ENCODE measurements at regions of chr3 and their contacts with region 1.

Region 1: GRCh38 chr3:9932843-9933560 is 632 bp upstream of the CRELD1 start:
- DNase-seq: peak; percentile 84
- H3K4me3 ChIP-seq: peak overlapping the region; percentile 19 to 76 (median 55)
- H3K27ac ChIP-seq: peak overlapping the region; percentile 85
- H3K4me1 ChIP-seq: peaks cover 16% of the 10 kb centered on the region
- H3K27me3 ChIP-seq: no peaks in the 10 kb centered on the region
- CTCF ChIP-seq: peak; percentile 75 to 91
- POLR2A ChIP-seq: no peak

Region 2: DNA sequence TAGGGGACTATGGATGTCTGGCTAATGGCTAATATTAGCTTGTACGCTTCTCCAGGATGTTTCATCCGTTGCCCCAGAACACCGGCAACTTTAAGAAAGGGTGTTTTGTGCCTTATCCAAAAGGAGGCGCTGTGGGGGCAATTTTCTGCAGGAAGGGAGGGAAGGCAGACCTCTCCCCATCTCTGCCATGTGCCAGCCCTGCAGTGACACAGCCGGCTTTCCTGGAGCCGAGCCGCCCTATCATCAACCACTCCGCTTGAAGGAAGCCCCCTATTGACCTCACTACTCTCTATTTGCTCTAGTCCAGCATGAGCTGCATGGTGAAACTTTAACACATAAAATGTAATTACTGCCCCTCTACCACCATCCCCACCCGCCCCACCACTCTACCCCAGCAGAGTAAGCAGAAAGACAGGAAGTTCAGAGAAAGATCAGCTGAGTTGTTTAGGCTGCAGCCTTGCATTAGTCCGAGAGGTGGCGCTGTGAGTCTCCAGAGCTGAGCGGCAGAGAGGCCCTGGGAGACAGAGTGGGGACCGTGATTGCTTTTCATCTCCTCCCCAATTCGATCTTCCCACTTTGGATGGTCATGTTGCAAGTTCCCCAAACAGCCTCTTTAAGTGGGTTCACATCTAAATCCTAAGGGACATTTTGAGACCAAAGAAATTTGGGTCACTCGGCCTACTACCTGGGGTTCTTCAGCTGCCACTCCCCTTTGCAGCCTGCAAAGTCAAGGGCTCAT is 945.2 kb before region 1 on chr3:
- CTCF ChIA-PET with region 1: no interaction called
- POLR2A ChIA-PET with region 1: no interaction called
- dilution Hi-C with region 1: no loop called
- intact Hi-C with region 1: no loop called
- DNase-seq: peak; percentile 67
- H3K4me3 ChIP-seq: no peak overlapping the region
- H3K27ac ChIP-seq: no peak overlapping the region
- H3K4me1 ChIP-seq: no peaks in the 10 kb centered on the region
- H3K27me3 ChIP-seq: no peaks in the 10 kb centered on the region
- CTCF ChIP-seq: peak; percentile 70 to 88
- POLR2A ChIP-seq: no peak

Region 3: DNA sequence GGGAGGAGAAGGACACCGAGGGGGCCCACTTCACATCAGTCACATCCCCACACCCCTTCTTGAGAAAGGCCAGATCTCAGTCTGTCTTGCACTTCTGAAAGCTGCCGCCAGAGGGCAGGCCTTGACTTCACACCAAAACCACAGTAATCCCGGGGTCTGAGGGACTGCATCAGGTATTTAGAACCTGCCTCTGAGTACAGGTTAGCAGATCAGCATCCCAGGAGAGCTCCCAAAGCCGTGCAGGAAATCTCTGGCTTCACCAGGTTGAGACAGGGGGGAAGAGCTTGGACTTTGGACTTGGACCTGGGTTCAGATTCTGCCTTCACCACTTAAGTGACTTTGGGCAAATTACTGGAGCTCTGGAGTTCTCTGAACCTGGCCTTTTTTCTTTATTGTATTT is 429.7 kb before region 1 on chr3:
- CTCF ChIA-PET with region 1: no interaction called
- POLR2A ChIA-PET with region 1: no interaction called
- dilution Hi-C with region 1: no loop called
- intact Hi-C with region 1: loop called (anchors 10 kb)
- DNase-seq: peak; percentile 72
- H3K4me3 ChIP-seq: no peak overlapping the region
- H3K27ac ChIP-seq: no peak overlapping the region
- H3K4me1 ChIP-seq: peaks cover 3% of the 10 kb centered on the region
- H3K27me3 ChIP-seq: peaks cover 10 to 15% of the 10 kb centered on the region in 2 experiments
- CTCF ChIP-seq: peak; percentile 88 to 95
- POLR2A ChIP-seq: no peak

Region 4: GRCh38 chr3:9809615-9810432 is 123.2 kb before region 1 on chr3 and contains the start of gene TTLL3:
- CTCF ChIA-PET with region 1: interaction called, 13 read pairs
- POLR2A ChIA-PET with region 1: no interaction called
- dilution Hi-C with region 1: no loop called
- intact Hi-C with region 1: no loop called
- DNase-seq: peak; percentile 53
- H3K4me3 ChIP-seq: peak within 1 kb of the TSS; percentile 52 to 64 (median 55)
- H3K27ac ChIP-seq: peak within 1 kb of the TSS; percentile 36
- H3K4me1 ChIP-seq: peaks cover 12% of the 10 kb centered on the region
- H3K27me3 ChIP-seq: no peaks in the 10 kb centered on the region
- CTCF ChIP-seq: peak in 1 of 2 donors; percentile 5
- POLR2A ChIP-seq: peak; percentile 72
- total RNA-seq, gene TTLL3: 41.8 and 43.5 TPM in 2 replicates

Region 5: DNA sequence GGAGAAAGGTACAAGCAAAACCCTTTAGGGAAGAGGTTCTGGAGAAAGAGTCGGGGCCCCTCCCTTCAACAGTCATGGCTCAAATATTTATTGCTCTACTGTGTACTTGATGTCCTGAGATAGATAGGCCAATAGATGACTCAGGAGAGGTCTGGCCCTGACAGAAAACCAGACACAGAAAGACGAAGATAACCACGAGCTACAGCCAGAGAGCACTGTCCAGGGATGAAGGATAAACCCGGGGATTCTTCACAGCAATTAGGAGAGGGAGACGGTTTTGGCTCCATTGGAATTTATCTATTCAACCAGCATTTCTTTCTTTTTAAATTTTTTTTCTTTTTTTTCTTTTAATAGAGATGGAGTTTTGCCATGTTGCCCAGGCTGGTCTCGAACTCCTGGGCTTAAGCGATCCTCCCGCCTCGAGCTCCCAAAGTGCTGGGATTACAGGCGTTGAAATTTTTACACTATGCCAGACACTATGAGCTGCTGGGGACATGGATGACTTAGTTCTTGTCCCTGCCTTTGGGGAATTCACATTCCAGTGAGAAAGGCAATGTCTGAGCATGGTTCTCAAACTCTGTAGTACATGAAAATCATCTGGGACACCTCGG is 48.3 kb before region 1 on chr3:
- CTCF ChIA-PET with region 1: interaction called, 14 read pairs
- POLR2A ChIA-PET with region 1: interaction called, 3 read pairs
- dilution Hi-C with region 1: no loop called
- intact Hi-C with region 1: no loop called
- DNase-seq: no peak
- H3K4me3 ChIP-seq: no peak overlapping the region
- H3K27ac ChIP-seq: no peak overlapping the region
- H3K4me1 ChIP-seq: peaks cover 7% of the 10 kb centered on the region
- H3K27me3 ChIP-seq: no peaks in the 10 kb centered on the region
- CTCF ChIP-seq: no peak
- POLR2A ChIP-seq: no peak

Region 6: GRCh38 chr3:9994086-9994844 is 61.3 kb after region 1 on chr3:
- CTCF ChIA-PET with region 1: no interaction called
- POLR2A ChIA-PET with region 1: no interaction called
- dilution Hi-C with region 1: no loop called
- intact Hi-C with region 1: no loop called
- DNase-seq: no peak
- H3K4me3 ChIP-seq: no peak overlapping the region
- H3K27ac ChIP-seq: no peak overlapping the region
- H3K4me1 ChIP-seq: no peaks in the 10 kb centered on the region
- H3K27me3 ChIP-seq: no peaks in the 10 kb centered on the region
- CTCF ChIP-seq: no peak
- POLR2A ChIP-seq: no peak

Region 7: DNA sequence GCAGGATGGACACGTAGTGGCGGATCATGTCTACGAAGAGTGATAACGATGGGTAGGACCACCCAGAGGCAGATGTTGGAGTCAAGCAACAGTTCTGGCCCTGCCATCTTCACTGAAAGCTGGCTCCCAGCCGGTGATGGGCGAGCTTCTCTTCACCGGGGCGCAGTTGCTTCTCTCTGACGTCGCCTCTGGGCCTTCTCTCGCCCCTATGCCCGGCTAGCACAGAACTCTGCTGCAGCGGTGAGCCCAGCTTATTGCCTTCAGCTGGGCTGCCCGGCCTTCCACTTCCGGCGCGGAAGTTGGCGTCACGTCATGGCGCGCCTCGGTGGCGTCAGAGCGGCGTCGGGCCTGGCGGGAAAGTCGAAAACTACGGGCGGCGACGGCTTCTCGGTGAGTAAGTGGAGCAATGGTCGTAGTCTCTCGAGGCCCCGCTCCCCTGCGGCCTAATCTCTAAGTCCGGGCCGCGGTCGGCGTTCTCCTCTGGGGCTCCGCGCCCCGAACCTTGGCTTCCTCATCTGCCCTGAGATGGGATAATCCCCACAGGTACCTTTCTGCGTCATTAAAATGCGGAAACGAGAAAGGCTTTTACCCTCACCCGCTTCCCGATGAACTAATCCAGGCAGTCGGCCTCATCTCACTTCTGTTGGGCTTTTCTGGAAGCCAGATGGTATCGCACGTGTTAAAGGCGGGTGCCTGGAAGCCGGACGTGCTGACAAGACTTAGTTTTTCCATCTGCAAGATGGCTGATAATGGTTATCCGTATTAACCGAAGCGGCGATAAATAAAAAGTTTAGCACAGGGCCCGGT is 93.3 kb after region 1 on chr3 and contains the start of gene FANCD2:
- CTCF ChIA-PET with region 1: interaction called, 3 read pairs
- POLR2A ChIA-PET with region 1: no interaction called
- dilution Hi-C with region 1: no loop called
- intact Hi-C with region 1: loop called (anchors 1 kb)
- DNase-seq: peak; percentile 92
- H3K4me3 ChIP-seq: peak within 1 kb of the TSS; percentile 55 to 84 (median 81)
- H3K27ac ChIP-seq: peak within 1 kb of the TSS; percentile 88
- H3K4me1 ChIP-seq: peaks cover 13% of the 10 kb centered on the region
- H3K27me3 ChIP-seq: no peaks in the 10 kb centered on the region
- CTCF ChIP-seq: no peak
- POLR2A ChIP-seq: peak; percentile 79
- total RNA-seq, gene FANCD2: 23.4 and 26.8 TPM in 2 replicates

Region 8: GRCh38 chr3:10738688-10739372 is 805.8 kb after region 1 on chr3:
- CTCF ChIA-PET with region 1: interaction called, 7 read pairs
- POLR2A ChIA-PET with region 1: no interaction called
- dilution Hi-C with region 1: no loop called
- intact Hi-C with region 1: loop called (anchors 10 kb)
- DNase-seq: peak; percentile 70
- H3K4me3 ChIP-seq: peak overlapping the region in 1 of 3 experiments; percentile 18
- H3K27ac ChIP-seq: no peak overlapping the region
- H3K4me1 ChIP-seq: no peaks in the 10 kb centered on the region
- H3K27me3 ChIP-seq: peaks cover 0 to 5% of the 10 kb centered on the region in 2 experiments
- CTCF ChIP-seq: peak; percentile 75 to 89
- POLR2A ChIP-seq: no peak

Measured in endothelial cell of umbilical vein (primary cell).